IMR-90 (cell line): ENCODE measurements at regions of chr11 and their contacts with region 1.

Region 1: DNA sequence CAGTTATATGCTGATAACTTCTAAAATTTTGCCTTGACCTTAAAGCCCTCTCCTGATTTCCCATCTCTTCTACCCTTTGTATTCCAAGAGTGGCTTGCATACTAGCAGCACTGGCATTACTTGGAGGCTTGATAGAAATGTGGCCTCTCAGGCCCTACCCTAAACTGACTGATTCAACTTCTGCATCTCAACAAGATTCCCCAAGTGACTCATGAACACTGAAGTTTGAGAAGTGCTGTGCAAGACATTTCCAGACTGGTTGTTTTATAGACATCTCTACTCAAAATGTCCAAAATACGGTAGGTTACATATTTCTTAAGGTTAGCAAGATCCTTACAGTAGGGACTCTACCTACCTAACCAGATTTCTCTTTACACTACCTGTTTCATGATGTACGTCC is 48.6 kb downstream of the SESN3 start:
- DNase-seq: no peak
- ATAC-seq: no peak
- H3K4me3 ChIP-seq: no peak overlapping the region
- H3K27ac ChIP-seq: no peak overlapping the region
- H3K4me1 ChIP-seq: no peaks in the 10 kb centered on the region
- H3K27me3 ChIP-seq: no peaks in the 10 kb centered on the region
- CTCF ChIP-seq: no peak
- POLR2A ChIP-seq: no peak
- RAD21 ChIP-seq: no peak

Region 2: DNA sequence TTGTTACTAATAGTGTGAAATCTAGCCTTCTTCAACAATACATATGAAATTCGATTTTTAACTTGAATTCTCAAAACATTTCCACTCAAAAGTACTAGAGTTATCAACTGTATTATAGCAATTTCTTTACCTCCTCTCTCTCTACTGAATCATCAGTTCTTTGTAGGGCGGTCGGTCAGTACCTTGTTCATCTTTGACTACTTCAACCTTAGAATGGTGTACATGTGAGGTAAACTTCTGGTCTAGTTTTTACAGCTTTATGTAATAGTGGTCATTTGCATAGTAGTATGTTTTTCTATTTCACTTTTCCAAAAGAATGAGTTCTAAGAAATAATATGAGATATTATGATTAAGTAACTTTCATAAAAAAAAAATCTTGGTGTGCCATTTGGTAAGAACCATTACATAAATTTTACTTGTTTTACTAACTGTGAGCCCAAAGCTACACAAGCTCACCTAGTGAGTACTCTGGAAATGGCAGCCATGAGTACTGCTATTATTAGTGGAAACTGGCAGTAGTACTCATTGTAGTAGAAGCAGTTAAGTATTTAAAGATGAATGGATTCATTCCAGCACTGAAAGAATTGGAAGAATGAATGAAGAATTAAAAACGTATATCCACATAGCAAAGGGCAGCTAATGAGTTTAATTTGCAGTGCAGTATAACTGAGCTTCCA is 18.5 kb after region 1 on chr11:
- CTCF ChIA-PET with region 1: no interaction called
- POLR2A ChIA-PET with region 1: interaction called, 10 read pairs
- dilution Hi-C with region 1: no loop called
- in situ Hi-C with region 1: no loop called
- intact Hi-C with region 1: no loop called
- DNase-seq: no peak
- ATAC-seq: no peak
- H3K4me3 ChIP-seq: no peak overlapping the region
- H3K27ac ChIP-seq: no peak overlapping the region
- H3K4me1 ChIP-seq: no peaks in the 10 kb centered on the region
- H3K27me3 ChIP-seq: no peaks in the 10 kb centered on the region
- CTCF ChIP-seq: no peak
- POLR2A ChIP-seq: no peak
- RAD21 ChIP-seq: no peak